Dendritic cell treated with granulocyte-macrophage colony-stimulating factor and Interleukin-4, amounts not matched to agents 40 ng/mL and 50 ng/mL, for 4 days (primary cell): ENCODE measurements at regions of chr5 and their contacts with region 1.

Region 1: DNA sequence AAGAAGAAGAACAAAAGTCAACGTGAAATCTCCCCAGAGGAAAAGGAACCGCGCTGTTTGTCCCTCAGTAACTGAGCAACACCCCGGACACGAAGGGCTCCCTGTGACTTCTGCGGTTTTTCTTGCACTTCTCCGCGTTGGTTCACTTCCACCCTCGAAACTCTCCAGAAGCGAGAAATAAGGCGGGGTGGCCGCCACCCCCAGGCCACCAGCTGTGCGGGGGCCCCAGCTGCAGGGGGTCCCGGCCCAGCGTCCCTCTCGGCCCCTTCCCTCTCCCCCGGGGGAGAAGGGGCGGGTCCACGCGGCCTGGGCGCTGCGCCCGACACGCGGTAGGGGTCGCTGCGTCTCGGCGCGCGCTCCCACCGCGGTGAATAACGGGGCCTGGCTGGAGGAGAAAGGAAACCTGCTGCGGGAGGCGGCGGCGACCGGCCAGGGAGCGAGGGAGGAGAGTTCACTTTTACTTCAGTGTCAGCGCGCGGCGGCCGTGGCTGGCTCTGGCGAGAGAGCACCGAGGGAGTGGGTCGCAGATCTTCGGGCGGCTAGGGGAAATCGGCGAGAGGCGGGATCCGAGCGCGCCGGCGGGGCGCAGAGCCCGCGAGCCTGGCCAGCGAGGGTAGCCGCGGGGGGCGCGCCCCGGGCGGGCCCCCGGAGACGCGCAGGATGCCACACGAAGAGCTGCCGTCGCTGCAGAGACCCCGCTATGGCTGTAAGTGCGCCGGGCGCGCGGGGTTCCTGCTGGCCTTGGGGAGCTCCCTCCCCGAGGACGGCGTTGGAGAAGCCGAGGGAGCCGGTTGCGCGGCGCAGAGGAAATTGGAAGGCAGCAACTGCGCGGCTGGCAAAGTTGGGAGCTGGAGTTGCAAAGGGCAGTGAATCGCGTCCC is at the start of gene IQGAP2:
- H3K4me3 Mint-ChIP-seq: peak within 1 kb of the TSS; percentile 91
- H3K27ac Mint-ChIP-seq: peak within 1 kb of the TSS; percentile 92
- H3K4me1 Mint-ChIP-seq: peaks cover 64% of the 10 kb centered on the region
- H3K27me3 Mint-ChIP-seq: no peaks in the 10 kb centered on the region

Region 2: DNA sequence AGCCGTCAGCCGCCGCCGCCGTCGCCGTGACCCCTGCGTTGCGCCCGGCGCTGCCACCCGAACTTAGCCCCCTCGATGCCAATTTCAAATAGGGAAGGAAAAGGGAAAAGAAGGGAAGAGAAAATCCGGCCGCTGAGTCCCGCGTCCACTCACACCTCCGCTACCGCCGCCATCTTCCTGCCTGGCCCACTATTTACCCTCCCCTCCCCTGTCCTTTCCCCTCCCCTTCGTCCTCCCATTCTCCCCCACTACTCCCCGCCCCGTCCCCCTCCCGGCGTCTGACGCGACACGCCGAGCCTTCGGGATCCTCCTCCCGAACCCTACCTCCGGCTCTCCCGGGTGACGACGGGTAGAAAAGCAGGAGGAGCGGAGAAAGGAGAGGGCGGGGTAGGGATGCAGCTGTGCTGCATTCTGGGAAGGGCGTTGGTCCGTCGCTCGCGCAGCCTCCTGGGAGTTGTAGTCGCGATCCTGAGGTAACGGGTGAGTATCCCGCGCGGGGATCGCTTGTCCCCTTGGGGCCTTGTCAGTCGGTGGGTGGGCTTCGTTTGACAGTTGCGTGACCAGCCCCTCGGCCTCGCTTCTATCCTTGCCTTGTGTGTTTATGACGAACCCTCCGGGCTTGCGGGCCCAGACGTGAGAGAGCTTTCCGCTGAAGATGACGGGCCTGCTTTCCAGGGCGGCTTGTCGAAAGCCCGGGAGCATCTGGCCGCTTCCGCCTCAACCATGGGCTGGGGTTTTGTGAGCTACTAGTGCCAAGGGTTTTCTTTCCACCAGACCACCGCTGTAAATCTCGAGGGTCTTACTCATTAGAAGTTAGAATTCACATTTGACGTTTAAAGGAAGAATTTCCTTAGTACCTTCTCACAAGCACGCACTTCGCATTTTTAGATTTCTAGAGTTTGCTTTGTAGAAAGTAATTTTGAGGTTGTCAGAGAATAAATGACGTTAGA is 891.4 kb before region 1 on chr5 and contains the starts of genes CERT1 and POLK:
- intact Hi-C with region 1: loop called (anchors 10 kb)
- H3K4me3 Mint-ChIP-seq: peak within 1 kb of the TSS; percentile 99
- H3K27ac Mint-ChIP-seq: peak within 1 kb of the TSS; percentile 98
- H3K4me1 Mint-ChIP-seq: peaks cover 40% of the 10 kb centered on the region
- H3K27me3 Mint-ChIP-seq: no peaks in the 10 kb centered on the region

Region 3: GRCh38 chr5:76134546-76135045 is 268.5 kb before region 1 on chr5:
- intact Hi-C with region 1: no loop called
- H3K4me3 Mint-ChIP-seq: no peak overlapping the region
- H3K27ac Mint-ChIP-seq: no peak overlapping the region
- H3K4me1 Mint-ChIP-seq: no peaks in the 10 kb centered on the region
- H3K27me3 Mint-ChIP-seq: peaks cover 19% of the 10 kb centered on the region

Region 4: GRCh38 chr5:76292620-76293322 is 110.4 kb before region 1 on chr5:
- intact Hi-C with region 1: loop called (anchors 10 kb)
- H3K4me3 Mint-ChIP-seq: no peak overlapping the region
- H3K27ac Mint-ChIP-seq: peak overlapping the region; percentile 82
- H3K4me1 Mint-ChIP-seq: peaks cover 62% of the 10 kb centered on the region
- H3K27me3 Mint-ChIP-seq: no peaks in the 10 kb centered on the region

Region 5: GRCh38 chr5:76331126-76331525 is 72.0 kb before region 1 on chr5:
- intact Hi-C with region 1: loop called (anchors 5 kb)
- H3K4me3 Mint-ChIP-seq: no peak overlapping the region
- H3K27ac Mint-ChIP-seq: peak overlapping the region; percentile 61
- H3K4me1 Mint-ChIP-seq: peaks cover 43% of the 10 kb centered on the region
- H3K27me3 Mint-ChIP-seq: peaks cover 2% of the 10 kb centered on the region

Region 6: GRCh38 chr5:76547242-76547890 is 144.2 kb after region 1 on chr5:
- intact Hi-C with region 1: loop called (anchors 1 kb)
- H3K4me3 Mint-ChIP-seq: peak overlapping the region; percentile 66
- H3K27ac Mint-ChIP-seq: peak overlapping the region; percentile 92
- H3K4me1 Mint-ChIP-seq: peaks cover 86% of the 10 kb centered on the region
- H3K27me3 Mint-ChIP-seq: no peaks in the 10 kb centered on the region

Region 7: GRCh38 chr5:76582230-76583162 is 179.4 kb after region 1 on chr5:
- intact Hi-C with region 1: loop called (anchors 1 kb)
- H3K4me3 Mint-ChIP-seq: no peak overlapping the region
- H3K27ac Mint-ChIP-seq: peak overlapping the region; percentile 79
- H3K4me1 Mint-ChIP-seq: peaks cover 42% of the 10 kb centered on the region
- H3K27me3 Mint-ChIP-seq: no peaks in the 10 kb centered on the region

Region 8: DNA sequence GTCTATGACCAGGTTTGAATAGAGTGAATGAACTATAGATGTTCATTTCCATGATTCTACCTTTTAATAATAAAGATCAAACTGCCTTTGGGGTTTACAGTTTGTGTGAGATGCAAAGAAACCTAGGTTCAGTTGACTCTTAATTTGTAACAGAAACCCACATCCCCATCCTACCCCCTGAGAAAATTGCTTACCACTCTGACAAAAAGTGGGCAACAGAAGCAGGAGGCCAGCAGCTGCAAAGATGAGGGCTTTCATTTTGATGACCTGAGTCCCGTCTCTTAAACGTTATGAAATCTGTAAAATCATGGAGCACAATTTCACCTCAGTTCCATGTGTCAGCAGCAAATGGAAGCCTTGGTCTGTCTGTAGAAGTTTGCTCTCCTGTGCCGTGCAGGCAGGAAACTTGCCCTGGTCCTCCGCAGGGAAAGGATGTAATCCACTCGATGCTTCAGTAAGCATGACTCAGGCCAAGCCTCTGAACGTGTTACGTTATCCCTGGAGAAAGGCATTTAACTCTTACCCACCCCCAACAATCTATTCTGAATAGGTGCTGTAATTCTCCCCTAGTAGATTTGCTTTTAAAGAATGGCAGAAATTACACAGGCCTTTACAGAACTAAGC is 220.0 kb after region 1 on chr5 and contains the start of gene F2RL2:
- intact Hi-C with region 1: no loop called
- H3K4me3 Mint-ChIP-seq: no peak within 1 kb of the TSS
- H3K27ac Mint-ChIP-seq: no peak within 1 kb of the TSS
- H3K4me1 Mint-ChIP-seq: peaks cover 35% of the 10 kb centered on the region
- H3K27me3 Mint-ChIP-seq: no peaks in the 10 kb centered on the region

Region 9: DNA sequence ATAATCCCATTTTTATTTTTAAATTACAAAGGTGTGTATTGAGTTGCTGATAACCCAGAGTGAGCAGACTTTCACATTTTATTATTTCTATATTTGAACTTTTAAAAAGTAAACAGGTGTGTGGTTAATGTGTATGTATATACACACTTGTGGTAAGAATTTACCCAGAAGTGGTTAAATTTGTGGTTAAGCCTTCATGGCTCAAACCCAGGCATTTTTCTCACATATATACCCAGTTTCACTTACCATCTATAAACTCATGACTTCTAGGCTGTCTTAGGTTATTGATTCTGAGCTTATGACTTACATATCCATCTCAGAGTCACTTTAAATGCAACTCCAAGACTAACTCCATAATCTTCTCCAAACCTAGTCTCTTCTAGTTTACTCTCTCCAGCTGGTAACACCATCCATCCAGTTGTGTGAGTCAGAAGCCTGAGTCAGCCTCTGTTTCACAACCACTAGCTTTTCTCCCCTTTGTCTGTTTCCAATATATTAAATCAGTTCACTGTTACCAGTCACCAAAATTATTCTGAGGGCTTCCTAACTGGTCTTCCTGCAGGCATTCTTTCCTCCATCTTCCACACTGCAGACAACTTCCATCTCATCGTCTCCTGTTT is 663.8 kb after region 1 on chr5:
- intact Hi-C with region 1: loop called (anchors 10 kb)
- H3K4me3 Mint-ChIP-seq: no peak overlapping the region
- H3K27ac Mint-ChIP-seq: peak overlapping the region; percentile 75
- H3K4me1 Mint-ChIP-seq: peaks cover 18% of the 10 kb centered on the region
- H3K27me3 Mint-ChIP-seq: no peaks in the 10 kb centered on the region